Aorta (tissue), 5 donors: ENCODE measurements at regions of chr3 and their contacts with region 1.

Region 1: DNA sequence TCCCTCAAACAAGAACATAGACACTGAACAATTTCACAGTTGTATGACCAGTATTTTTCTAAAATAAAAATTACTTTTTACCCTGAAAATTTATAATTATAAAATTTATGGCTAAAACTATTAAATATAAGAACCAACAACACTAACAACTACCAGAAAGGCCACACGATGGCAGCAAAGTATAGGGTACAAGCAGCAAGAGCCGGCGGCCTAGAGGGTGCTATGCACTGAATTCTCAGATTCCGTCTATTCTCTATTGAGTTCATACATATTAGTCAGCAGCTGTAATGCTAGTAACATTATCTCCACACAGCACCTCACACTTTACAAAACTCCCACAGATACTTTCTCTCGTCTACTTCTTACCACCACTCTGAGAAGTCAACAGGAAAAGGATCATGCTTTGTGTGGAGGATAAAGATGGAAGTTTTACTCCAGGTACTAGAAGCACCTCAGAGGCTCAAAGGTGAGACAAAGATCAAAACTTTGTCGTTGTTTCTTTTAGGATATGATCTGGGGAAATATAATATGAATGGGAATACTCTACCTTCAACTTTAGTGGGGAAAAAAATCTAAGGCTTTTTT is 160.5 kb downstream of the FGF12 start:
- DNase-seq: peak; percentile 78 to 81
- ATAC-seq: peak; percentile 76
- H3K4me3 ChIP-seq: no peak overlapping the region
- H3K27ac ChIP-seq: no peak overlapping the region
- H3K4me1 ChIP-seq: no peaks in the 10 kb centered on the region
- H3K27me3 ChIP-seq: no peaks in the 10 kb centered on the region

Region 2: GRCh38 chr3:192802957-192803899 is 236.4 kb after region 1 on chr3:
- intact Hi-C with region 1: loop called (anchors 1 to 2 kb)
- DNase-seq: no peak
- ATAC-seq: no peak
- H3K4me3 ChIP-seq: no peak overlapping the region
- H3K27ac ChIP-seq: no peak overlapping the region
- H3K4me1 ChIP-seq: no peaks in the 10 kb centered on the region
- H3K27me3 ChIP-seq: no peaks in the 10 kb centered on the region

Region 3: DNA sequence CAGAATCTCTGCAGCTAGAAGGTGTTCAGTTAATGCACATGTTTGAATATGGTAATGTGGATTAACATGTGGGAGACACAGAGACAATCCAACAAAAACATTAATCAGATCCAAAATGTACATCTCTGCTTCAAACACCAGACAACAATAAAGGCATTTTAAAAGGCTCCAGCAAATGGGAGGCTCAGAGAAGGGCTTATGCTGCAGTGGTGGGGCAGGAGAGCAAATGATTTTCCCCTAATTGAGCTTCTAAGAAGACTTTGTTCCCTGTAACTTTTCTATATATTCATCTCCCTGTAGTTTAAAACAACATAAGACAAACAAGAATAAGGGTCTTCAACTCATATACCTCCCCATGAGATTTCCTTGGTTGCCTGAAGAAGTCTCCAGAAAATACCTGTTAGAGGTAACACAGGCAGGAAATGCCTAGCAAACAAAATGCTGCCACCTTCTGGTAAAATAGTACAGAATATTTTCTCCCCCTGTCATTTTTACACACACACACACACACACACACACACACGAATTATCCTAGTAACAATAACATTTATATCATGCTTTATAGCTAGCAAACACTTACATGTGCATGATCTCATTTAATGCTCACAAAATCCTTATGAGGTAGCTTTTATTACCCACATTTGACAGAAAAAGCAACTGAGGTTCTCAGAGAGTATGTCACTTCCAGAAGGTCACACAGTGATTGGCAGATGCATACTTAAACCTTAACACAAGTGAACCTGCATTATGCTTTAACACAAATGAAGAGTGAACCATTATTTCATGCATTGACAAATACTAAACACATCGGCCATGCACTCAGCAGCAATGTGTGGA is 474.3 kb after region 1 on chr3:
- intact Hi-C with region 1: loop called (anchors 10 kb)
- DNase-seq: no peak
- ATAC-seq: no peak
- H3K4me3 ChIP-seq: no peak overlapping the region
- H3K27ac ChIP-seq: no peak overlapping the region
- H3K4me1 ChIP-seq: no peaks in the 10 kb centered on the region
- H3K27me3 ChIP-seq: no peaks in the 10 kb centered on the region

Region 4: DNA sequence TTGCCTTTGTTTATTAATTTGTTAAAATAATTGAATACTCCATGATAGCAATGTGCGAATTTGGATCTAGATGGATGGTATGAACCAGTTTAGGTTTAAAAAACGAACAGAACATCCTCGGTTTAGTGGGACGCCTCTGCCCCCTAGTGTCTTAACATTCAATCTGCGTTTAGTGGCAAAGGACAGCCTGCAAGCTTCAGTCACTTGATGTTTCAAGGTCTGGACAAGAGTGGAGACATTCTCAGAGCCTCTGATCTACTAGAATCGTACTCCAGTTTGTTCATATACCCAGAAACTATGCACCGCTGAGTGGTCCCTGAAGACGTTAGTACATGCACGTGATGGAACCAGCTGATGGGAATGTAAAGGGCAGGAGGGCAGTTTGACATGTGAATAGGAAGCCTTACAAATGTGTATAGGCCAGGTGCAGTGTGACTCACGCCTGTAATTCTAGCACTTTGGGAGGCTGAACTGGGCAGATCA is 1005.7 kb after region 1 on chr3:
- intact Hi-C with region 1: loop called in 1 of 2 experiments (anchors 10 kb)
- DNase-seq: peak in 1 of 2 donors; percentile 52
- ATAC-seq: peak; percentile 63
- H3K4me3 ChIP-seq: no peak overlapping the region
- H3K27ac ChIP-seq: no peak overlapping the region
- H3K4me1 ChIP-seq: no peaks in the 10 kb centered on the region
- H3K27me3 ChIP-seq: no peaks in the 10 kb centered on the region